Activated T-helper 2 cell treated with anti-CD3 and anti-CD28 coated beads, Interferon-gamma antibody, Interleukin-2, Interleukin-4, amounts not matched to agents 10 μg/mL and 5 μg/mL and 100 μg/mL, durations not matched to agents 14 hours and 24 hours and 36 hours (primary cell): ENCODE measurements at regions of chr6 and their contacts with region 1.

Region 1: DNA sequence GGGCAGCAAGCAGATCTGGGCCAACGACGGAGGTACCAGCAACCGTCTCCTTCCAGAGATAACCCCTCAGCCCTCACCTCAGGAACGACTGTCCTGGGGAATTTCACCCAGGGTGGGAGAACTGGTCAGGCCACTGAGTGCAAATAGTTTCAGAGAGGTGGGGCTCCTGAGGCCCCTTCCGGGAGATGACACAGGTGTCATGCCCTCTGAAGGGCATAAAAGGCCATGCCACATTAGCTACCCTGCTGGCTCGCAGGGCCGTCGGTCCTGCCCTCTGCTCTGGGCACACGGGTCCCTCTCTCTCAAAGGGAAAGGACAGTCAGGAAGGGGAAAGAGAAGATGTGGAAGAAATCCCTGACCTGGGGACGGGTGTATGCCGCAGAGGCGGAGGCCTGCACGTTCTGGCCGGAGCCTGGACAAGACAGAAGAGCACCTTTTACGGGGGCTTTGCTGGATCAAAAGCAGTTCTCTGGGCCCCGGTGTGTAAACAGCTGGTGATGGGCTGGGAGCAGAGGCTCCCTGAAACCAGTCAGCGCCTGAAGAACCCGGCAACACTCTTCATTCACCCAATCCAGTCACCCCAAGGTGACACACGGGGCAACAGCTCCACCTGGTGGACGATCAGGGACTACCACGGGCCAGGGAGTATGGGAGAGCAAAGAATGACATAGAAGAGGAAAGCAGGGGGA is 6.4 kb upstream of the TAF8 start:
- DNase-seq: peak; percentile 85
- H3K4me3 Mint-ChIP-seq: peak overlapping the region; percentile 66
- H3K27ac Mint-ChIP-seq: peak overlapping the region; percentile 66
- H3K4me1 Mint-ChIP-seq: peaks cover 75% of the 10 kb centered on the region
- H3K27me3 Mint-ChIP-seq: no peaks in the 10 kb centered on the region

Region 2: GRCh38 chr6:41787219-41787917 is 256.6 kb before region 1 on chr6 and contains the start of gene TOMM6:
- intact Hi-C with region 1: loop called (anchors 1 kb)
- DNase-seq: peak; percentile 95
- H3K4me3 Mint-ChIP-seq: peak within 1 kb of the TSS; percentile 96
- H3K27ac Mint-ChIP-seq: peak within 1 kb of the TSS; percentile 97
- H3K4me1 Mint-ChIP-seq: peaks cover 15% of the 10 kb centered on the region
- H3K27me3 Mint-ChIP-seq: peaks cover 3% of the 10 kb centered on the region
- total RNA-seq, gene TOMM6: 308 and 316 TPM in 2 replicates

Region 3: DNA sequence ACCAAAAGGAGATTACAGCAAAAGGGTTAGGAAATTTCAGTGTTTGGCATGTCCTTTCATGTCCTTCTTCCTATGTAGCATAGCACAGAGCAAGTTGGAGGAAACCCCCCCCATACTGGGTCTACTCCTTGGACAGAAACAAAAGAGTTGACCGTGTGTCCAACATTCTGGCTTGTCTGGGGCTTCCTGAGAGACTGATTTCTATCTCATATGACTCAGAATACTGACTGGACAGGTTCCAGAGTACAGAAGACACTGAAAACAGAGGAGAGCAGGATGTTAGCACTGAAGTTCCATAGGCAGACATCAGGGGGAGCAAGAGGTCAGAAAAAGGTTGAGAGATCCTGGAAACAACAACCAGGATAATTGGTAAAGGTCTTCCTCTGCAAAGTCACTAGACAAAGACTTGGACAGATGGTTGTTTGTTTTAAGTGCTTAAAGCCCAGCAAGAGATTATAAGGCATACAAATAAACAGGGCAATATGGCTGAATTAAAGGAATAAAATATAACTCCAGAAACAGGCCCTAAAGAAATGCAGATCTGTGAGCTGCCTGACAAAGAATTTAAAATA is 197.2 kb before region 1 on chr6:
- intact Hi-C with region 1: loop called (anchors 1 kb)
- DNase-seq: peak; percentile 21
- H3K4me3 Mint-ChIP-seq: no peak overlapping the region
- H3K27ac Mint-ChIP-seq: no peak overlapping the region
- H3K4me1 Mint-ChIP-seq: peaks cover 19% of the 10 kb centered on the region
- H3K27me3 Mint-ChIP-seq: no peaks in the 10 kb centered on the region

Region 4: GRCh38 chr6:41895300-41896233 is 148.4 kb before region 1 on chr6 and contains the start of gene USP49:
- intact Hi-C with region 1: loop called (anchors 1 kb)
- DNase-seq: peak; percentile 86
- H3K4me3 Mint-ChIP-seq: no peak within 1 kb of the TSS
- H3K27ac Mint-ChIP-seq: peak within 1 kb of the TSS; percentile 88
- H3K4me1 Mint-ChIP-seq: peaks cover 8% of the 10 kb centered on the region
- H3K27me3 Mint-ChIP-seq: no peaks in the 10 kb centered on the region
- total RNA-seq, gene USP49: 6.1 and 6.4 TPM in 2 replicates

Region 5: DNA sequence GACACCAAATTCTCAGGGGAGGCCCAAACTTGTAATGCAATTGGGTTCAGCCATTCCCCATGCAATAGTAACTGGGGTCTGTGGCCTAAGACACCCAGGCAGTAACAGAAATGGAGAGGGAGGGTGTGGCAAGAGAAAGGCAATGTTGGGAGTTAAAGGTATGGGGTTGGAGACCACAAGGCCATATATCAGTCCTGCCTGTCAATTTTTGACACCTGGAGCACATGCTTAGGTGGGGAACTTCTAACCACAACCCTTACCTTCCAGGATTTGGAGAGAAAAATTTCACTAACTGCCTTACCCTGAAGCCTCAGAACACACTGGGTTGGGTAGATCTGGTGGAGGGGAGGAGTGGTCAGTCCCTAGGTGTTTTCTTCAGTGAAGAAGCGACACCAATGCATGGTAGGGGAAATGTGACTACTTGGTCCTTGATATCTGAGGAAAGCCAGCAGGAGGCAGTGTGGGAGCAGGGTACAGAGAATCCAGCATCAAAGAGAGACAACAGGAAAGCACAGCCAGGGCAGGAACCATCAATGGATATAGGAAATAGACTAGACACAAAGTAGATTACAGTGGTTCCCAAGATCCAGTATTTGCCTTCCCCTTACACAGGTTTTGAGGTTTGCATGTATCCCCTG is 141.9 kb before region 1 on chr6:
- intact Hi-C with region 1: loop called (anchors 1 kb)
- DNase-seq: peak; percentile 34
- H3K4me3 Mint-ChIP-seq: no peak overlapping the region
- H3K27ac Mint-ChIP-seq: no peak overlapping the region
- H3K4me1 Mint-ChIP-seq: peaks cover 13% of the 10 kb centered on the region
- H3K27me3 Mint-ChIP-seq: no peaks in the 10 kb centered on the region

Region 6: GRCh38 chr6:42009966-42010891 is 33.7 kb before region 1 on chr6:
- intact Hi-C with region 1: loop called (anchors 5 kb)
- DNase-seq: no peak
- H3K4me3 Mint-ChIP-seq: peak overlapping the region; percentile 54
- H3K27ac Mint-ChIP-seq: peak overlapping the region; percentile 93
- H3K4me1 Mint-ChIP-seq: peaks cover 59% of the 10 kb centered on the region
- H3K27me3 Mint-ChIP-seq: no peaks in the 10 kb centered on the region

Region 7: GRCh38 chr6:42028234-42029061 is 15.5 kb before region 1 on chr6:
- intact Hi-C with region 1: no loop called
- DNase-seq: no peak
- H3K4me3 Mint-ChIP-seq: peak overlapping the region; percentile 63
- H3K27ac Mint-ChIP-seq: peak overlapping the region; percentile 87
- H3K4me1 Mint-ChIP-seq: peaks cover 63% of the 10 kb centered on the region
- H3K27me3 Mint-ChIP-seq: no peaks in the 10 kb centered on the region